Endothelial cell of umbilical vein (primary cell): ENCODE measurements at regions of chr10 and their contacts with region 1.

Region 1: GRCh38 chr10:110610308-110610774 is 33.8 kb upstream of the RBM20 start:
- DNase-seq: peak; percentile 58
- H3K4me3 ChIP-seq: no peak overlapping the region
- H3K27ac ChIP-seq: no peak overlapping the region
- H3K4me1 ChIP-seq: no peaks in the 10 kb centered on the region
- H3K27me3 ChIP-seq: peaks cover 6 to 10% of the 10 kb centered on the region in 2 experiments
- CTCF ChIP-seq: peak; percentile 68 to 71
- POLR2A ChIP-seq: no peak

Region 2: GRCh38 chr10:110643653-110644597 is 33.6 kb after region 1 on chr10 and contains the start of gene RBM20:
- CTCF ChIA-PET with region 1: no interaction called
- POLR2A ChIA-PET with region 1: no interaction called
- dilution Hi-C with region 1: no loop called
- intact Hi-C with region 1: no loop called
- DNase-seq: no peak
- H3K4me3 ChIP-seq: peak within 1 kb of the TSS; percentile 12 to 36 (median 13)
- H3K27ac ChIP-seq: no peak within 1 kb of the TSS
- H3K4me1 ChIP-seq: peaks cover 5% of the 10 kb centered on the region
- H3K27me3 ChIP-seq: peaks cover 42 to 79% of the 10 kb centered on the region in 2 experiments
- CTCF ChIP-seq: no peak
- POLR2A ChIP-seq: no peak
- total RNA-seq, gene RBM20: not detected in 2 replicates

Region 3: DNA sequence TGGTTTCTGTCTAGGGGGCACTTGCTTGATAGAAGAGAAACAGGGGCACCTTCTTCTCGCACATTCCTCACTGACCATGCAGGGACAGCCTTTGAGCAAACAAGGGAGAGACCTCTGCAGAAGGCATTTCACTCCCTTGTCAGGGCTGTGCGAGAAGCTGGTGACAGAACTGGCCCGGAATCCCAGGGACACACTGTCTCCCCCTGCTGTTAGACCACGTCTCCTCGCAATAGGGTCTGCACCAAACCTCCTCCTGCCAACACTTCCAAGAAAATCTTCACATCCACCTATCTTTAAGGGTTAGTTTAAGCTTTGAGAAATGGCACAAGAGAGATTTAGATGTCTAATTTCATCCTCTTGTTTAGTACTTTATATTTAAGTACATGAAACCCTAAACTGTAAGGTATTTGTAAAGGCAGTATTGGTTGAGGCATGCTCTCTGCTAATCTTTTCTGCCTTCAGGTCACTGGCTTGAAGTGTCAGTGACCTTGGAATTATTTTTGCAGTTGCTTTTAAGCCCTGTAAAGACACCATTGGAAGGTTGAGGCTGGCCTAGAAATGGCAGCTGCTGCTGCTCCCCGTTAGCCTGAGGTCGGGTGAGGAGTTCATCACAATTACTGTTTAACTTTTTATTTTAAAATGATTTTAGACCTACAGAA is 70.8 kb after region 1 on chr10:
- CTCF ChIA-PET with region 1: interaction called, 20 read pairs
- POLR2A ChIA-PET with region 1: no interaction called
- dilution Hi-C with region 1: no loop called
- intact Hi-C with region 1: loop called (anchors 1 kb)
- DNase-seq: peak; percentile 33
- H3K4me3 ChIP-seq: no peak overlapping the region
- H3K27ac ChIP-seq: no peak overlapping the region
- H3K4me1 ChIP-seq: no peaks in the 10 kb centered on the region
- H3K27me3 ChIP-seq: peaks cover 6 to 9% of the 10 kb centered on the region in 2 experiments
- CTCF ChIP-seq: peak; percentile 56 to 67
- POLR2A ChIP-seq: no peak

Region 4: GRCh38 chr10:110893559-110894179 is 283.3 kb after region 1 on chr10:
- CTCF ChIA-PET with region 1: no interaction called
- POLR2A ChIA-PET with region 1: no interaction called
- dilution Hi-C with region 1: no loop called
- intact Hi-C with region 1: loop called (anchors 1 kb)
- DNase-seq: peak; percentile 62
- H3K4me3 ChIP-seq: no peak overlapping the region
- H3K27ac ChIP-seq: no peak overlapping the region
- H3K4me1 ChIP-seq: no peaks in the 10 kb centered on the region
- H3K27me3 ChIP-seq: no peaks in the 10 kb centered on the region
- CTCF ChIP-seq: peak; percentile 17 to 29
- POLR2A ChIP-seq: no peak